HCT116 (cell line): ENCODE measurements at regions of chr19 and their contacts with region 1.

Region 1: GRCh38 chr19:15154002-15154612 is 46.7 kb downstream of the NOTCH3 start:
- DNase-seq: peak; percentile 37
- ATAC-seq: peak; percentile 66
- H3K4me3 ChIP-seq: no peak overlapping the region
- H3K27ac ChIP-seq: no peak overlapping the region
- H3K4me1 ChIP-seq: no peaks in the 10 kb centered on the region
- H3K27me3 ChIP-seq: no peaks in the 10 kb centered on the region
- CTCF ChIP-seq: peak; percentile 49 to 74 (median 71); a peak in 5 of 6 replicates
- POLR2A ChIP-seq: no peak
- RAD21 ChIP-seq: peak; percentile 69

Region 2: DNA sequence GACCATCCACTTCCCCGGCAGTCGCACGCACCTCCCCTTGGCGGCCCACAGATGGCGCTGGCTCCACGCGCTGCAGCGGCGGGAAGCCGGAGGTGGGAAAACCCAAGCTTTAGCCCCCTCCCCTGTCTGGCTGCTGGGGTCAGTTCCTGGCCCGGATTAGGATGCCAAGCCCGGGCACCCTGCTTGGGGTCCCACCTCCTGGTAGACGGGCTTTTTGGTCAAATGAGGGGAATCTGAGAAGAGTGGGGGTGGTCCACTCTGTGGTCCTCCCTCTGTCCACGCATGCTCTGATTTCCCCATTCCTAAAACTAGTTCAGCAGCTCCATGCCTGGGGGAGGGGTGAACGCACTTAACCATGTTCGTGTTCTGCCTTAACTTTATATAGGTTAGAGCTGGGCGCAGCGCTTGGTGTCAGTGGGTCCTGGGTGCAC is 367.7 kb before region 1 on chr19:
- CTCF ChIA-PET with region 1: interaction called, 3 read pairs
- POLR2A ChIA-PET with region 1: no interaction called
- RAD21 ChIA-PET with region 1: no interaction called
- intact Hi-C with region 1: loop called (anchors 2 kb)
- DNase-seq: no peak
- ATAC-seq: peak; percentile 84
- H3K4me3 ChIP-seq: peak overlapping the region; percentile 22 to 39
- H3K27ac ChIP-seq: no peak overlapping the region
- H3K4me1 ChIP-seq: peaks cover 14 to 24% of the 10 kb centered on the region in 2 experiments; a peak in 3 of 4 replicates
- H3K27me3 ChIP-seq: no peaks in the 10 kb centered on the region
- CTCF ChIP-seq: peak; percentile 70 to 95 (median 90); a peak in 5 of 6 replicates
- POLR2A ChIP-seq: no peak
- RAD21 ChIP-seq: peak; percentile 85

Region 3: GRCh38 chr19:14871619-14872230 is 282.4 kb before region 1 on chr19:
- CTCF ChIA-PET with region 1: no interaction called
- POLR2A ChIA-PET with region 1: no interaction called
- RAD21 ChIA-PET with region 1: no interaction called
- intact Hi-C with region 1: loop called (anchors 5 kb)
- DNase-seq: peak; percentile 22
- ATAC-seq: peak; percentile 62
- H3K4me3 ChIP-seq: no peak overlapping the region
- H3K27ac ChIP-seq: no peak overlapping the region
- H3K4me1 ChIP-seq: no peaks in the 10 kb centered on the region
- H3K27me3 ChIP-seq: peaks cover 45% of the 10 kb centered on the region
- CTCF ChIP-seq: peak; percentile 46 to 80 (median 59); a peak in 5 of 6 replicates
- POLR2A ChIP-seq: no peak
- RAD21 ChIP-seq: peak; percentile 73

Region 4: DNA sequence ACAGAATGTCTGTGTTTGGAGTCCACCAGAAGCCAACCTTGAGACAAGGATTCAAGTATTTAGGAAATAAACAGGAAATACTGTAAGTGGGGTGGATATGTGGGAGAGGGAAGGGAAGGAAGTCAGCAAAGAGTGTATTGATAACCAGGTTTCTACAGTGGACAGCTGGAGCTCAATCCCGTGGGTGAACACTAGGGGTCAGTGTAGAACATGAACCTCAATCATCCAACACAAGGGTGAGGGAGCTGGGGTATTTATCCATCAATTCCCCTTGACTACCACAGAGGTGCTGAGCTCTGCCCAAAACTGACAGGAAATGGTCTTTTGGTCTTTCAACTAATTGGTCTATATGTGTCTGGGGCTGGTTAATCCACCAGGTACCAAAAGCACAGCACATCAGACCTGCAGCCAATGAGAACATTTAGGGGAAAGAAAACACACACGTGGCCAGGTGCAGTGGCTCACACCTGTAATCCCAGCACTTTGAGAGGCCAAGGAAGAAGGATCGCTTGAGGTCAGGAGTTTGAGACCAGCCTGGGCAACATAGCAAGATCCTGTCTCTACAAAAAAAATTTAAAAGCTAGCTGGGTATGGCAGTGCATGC is 52.5 kb before region 1 on chr19:
- CTCF ChIA-PET with region 1: interaction called, 5 read pairs
- POLR2A ChIA-PET with region 1: no interaction called
- RAD21 ChIA-PET with region 1: no interaction called
- intact Hi-C with region 1: loop called (anchors 2 kb)
- DNase-seq: peak; percentile 38
- ATAC-seq: peak; percentile 82
- H3K4me3 ChIP-seq: no peak overlapping the region
- H3K27ac ChIP-seq: no peak overlapping the region
- H3K4me1 ChIP-seq: peaks cover 5% of the 10 kb centered on the region in 2 experiments; a peak in 3 of 4 replicates
- H3K27me3 ChIP-seq: no peaks in the 10 kb centered on the region
- CTCF ChIP-seq: peak; percentile 56 to 83 (median 80)
- POLR2A ChIP-seq: no peak
- RAD21 ChIP-seq: peak; percentile 68